ENCODE measurements at regions of chr12 and their contacts with region 1.

Region 1: GRCh38 chr12:50174971-50175715 is 8.0 kb upstream of the CERS5 start:
- DNase-seq: no peak
- ATAC-seq: peak; percentile 27

Region 2: DNA sequence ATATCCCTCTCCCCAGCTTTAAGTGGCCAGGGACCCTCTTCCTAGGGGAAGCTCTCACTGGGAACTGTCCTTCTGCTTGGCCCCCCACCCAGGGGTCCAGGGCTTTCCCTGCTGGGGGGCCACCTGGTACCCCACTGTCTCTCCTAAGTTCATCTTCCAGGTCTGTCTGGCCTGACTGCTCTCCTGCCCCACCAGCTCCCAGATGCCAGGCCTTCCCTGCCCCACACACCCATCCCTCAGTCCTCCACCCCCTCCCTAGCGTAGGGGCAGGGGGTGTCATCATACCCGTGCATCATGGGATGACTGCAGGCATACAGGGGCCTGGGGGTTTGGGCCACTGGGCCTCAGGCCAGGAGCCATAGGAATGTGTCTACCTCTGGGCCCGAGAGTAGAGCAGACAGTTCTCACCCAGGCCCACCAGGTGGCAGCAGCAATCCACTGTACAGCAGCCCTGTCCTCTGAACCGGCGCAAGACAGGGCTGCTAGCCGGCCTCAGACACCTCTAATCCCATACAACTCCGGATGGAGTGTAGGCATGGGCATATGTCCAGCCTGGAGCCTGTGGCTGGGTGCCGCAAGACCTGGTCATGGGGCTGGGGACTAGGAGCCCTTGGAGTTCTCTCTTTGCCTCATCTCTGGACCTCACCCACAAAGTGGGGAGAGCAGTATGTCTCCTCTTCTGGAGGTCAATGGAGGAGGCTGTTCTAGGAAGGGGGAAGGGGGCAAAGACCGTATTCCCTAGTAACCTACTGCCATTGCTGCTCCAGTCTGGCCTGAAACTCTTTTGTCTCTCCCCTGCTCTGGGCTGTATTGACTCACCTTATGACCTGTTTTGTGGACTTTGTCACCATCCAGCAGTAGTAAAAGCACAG is 100.0 kb before region 1 on chr12:
- intact Hi-C with region 1: loop called (anchors 2 to 10 kb)
- DNase-seq: peak; percentile 75 to 87
- ATAC-seq: peak; percentile 83

Region 3: GRCh38 chr12:50085615-50086072 is 89.5 kb before region 1 on chr12:
- intact Hi-C with region 1: no loop called
- DNase-seq: no peak
- ATAC-seq: no peak